Activated CD8-positive, alpha-beta T cell treated with anti-CD3 and anti-CD28 coated beads for 36 hours (primary cell): ENCODE measurements at regions of chr2 and their contacts with region 1.

Region 1: GRCh38 chr2:105744091-105744908 is 412 bp upstream of the NCK2 start:
- DNase-seq: peak; percentile 59
- ATAC-seq: peak; percentile 64
- H3K4me3 Mint-ChIP-seq: peak overlapping the region; percentile 75
- H3K27ac Mint-ChIP-seq: peak overlapping the region; percentile 88
- H3K4me1 Mint-ChIP-seq: peaks cover 60% of the 10 kb centered on the region
- H3K27me3 Mint-ChIP-seq: no peaks in the 10 kb centered on the region
- CTCF ChIP-seq: no peak

Region 2: GRCh38 chr2:105582952-105583660 is 161.2 kb before region 1 on chr2:
- CTCF ChIA-PET with region 1: interaction called, 3 read pairs
- POLR2A ChIA-PET with region 1: interaction called, 3 read pairs
- intact Hi-C with region 1: loop called (anchors 10 kb)
- DNase-seq: no peak
- ATAC-seq: no peak
- H3K4me3 Mint-ChIP-seq: no peak overlapping the region
- H3K27ac Mint-ChIP-seq: no peak overlapping the region
- H3K4me1 Mint-ChIP-seq: peaks cover 29% of the 10 kb centered on the region
- H3K27me3 Mint-ChIP-seq: no peaks in the 10 kb centered on the region
- CTCF ChIP-seq: no peak

Region 3: GRCh38 chr2:105789745-105790460 is 45.6 kb after region 1 on chr2:
- CTCF ChIA-PET with region 1: interaction called, 9 read pairs
- POLR2A ChIA-PET with region 1: interaction called, 27 read pairs
- intact Hi-C with region 1: no loop called
- DNase-seq: peak; percentile 87
- ATAC-seq: peak; percentile 82
- H3K4me3 Mint-ChIP-seq: peak overlapping the region; percentile 69
- H3K27ac Mint-ChIP-seq: peak overlapping the region; percentile 97
- H3K4me1 Mint-ChIP-seq: peaks cover 92% of the 10 kb centered on the region
- H3K27me3 Mint-ChIP-seq: no peaks in the 10 kb centered on the region
- CTCF ChIP-seq: no peak

Region 4: DNA sequence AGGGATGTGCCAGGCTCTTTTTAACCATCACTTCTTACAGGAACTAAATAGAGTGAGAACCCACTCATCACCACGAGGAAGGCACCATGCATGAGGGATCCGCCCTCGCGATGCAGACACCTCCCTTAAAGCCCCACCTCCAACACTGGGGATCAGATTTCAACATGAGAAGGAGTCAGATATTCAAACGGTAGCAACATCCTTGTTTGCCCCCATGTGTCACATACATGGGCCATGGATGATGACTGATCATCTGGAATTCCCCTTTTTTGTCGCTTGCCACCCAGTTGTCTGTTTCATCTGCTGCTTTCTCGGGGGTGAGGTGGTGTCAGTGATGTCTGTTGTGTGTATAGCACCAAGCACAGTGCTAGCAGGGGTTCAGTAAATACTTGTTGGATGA is 58.3 kb after region 1 on chr2:
- CTCF ChIA-PET with region 1: interaction called, 14 read pairs
- POLR2A ChIA-PET with region 1: interaction called, 53 read pairs
- intact Hi-C with region 1: loop called (anchors 2 kb)
- DNase-seq: peak; percentile 84
- ATAC-seq: peak; percentile 78
- H3K4me3 Mint-ChIP-seq: peak overlapping the region; percentile 19
- H3K27ac Mint-ChIP-seq: peak overlapping the region; percentile 93
- H3K4me1 Mint-ChIP-seq: peaks cover 95% of the 10 kb centered on the region
- H3K27me3 Mint-ChIP-seq: no peaks in the 10 kb centered on the region
- CTCF ChIP-seq: no peak

Region 5: DNA sequence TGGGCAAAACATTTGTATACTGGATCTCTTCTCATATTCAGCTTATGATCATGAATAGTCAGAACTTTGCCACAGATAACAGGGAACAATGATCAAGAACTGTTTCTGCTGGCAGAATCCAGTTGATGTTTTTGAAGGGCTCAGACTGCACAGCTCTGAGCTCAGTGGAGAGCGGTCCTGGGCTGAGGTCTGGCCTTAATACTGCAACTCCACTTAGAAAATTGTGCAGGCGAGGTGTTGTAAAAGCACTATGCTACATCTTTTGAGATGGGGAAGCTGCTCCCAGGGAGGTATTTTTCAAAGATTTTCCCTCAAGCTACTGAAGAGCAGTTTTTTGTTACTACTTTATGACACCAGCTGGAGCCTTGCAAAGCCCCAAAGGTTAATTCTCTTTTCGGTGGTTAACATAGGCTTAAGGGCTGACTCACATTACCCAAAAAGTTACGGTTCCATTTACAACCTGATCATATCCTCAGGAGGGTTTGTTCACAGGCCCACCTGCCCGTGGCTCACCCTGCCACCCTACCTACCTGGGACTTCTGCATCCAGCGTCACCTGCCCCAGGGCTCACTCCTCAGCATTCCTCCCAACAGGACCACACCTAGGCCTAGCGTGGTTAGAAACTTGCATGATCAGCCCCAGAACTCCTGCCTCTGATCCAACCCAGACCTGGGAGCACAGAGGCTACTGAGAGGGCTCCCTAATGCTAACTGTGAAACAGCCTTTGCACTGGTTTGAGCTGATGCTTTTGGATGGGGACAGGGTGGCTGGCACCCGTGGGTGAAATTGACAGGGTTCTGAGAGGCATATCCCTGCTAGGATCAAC is 114.8 kb after region 1 on chr2:
- CTCF ChIA-PET with region 1: interaction called, 6 read pairs
- POLR2A ChIA-PET with region 1: interaction called, 6 read pairs
- intact Hi-C with region 1: loop called (anchors 5 kb)
- DNase-seq: peak; percentile 62
- ATAC-seq: peak; percentile 64
- H3K4me3 Mint-ChIP-seq: peak overlapping the region; percentile 27
- H3K27ac Mint-ChIP-seq: peak overlapping the region; percentile 92
- H3K4me1 Mint-ChIP-seq: peaks cover 93% of the 10 kb centered on the region
- H3K27me3 Mint-ChIP-seq: no peaks in the 10 kb centered on the region
- CTCF ChIP-seq: no peak

Region 6: DNA sequence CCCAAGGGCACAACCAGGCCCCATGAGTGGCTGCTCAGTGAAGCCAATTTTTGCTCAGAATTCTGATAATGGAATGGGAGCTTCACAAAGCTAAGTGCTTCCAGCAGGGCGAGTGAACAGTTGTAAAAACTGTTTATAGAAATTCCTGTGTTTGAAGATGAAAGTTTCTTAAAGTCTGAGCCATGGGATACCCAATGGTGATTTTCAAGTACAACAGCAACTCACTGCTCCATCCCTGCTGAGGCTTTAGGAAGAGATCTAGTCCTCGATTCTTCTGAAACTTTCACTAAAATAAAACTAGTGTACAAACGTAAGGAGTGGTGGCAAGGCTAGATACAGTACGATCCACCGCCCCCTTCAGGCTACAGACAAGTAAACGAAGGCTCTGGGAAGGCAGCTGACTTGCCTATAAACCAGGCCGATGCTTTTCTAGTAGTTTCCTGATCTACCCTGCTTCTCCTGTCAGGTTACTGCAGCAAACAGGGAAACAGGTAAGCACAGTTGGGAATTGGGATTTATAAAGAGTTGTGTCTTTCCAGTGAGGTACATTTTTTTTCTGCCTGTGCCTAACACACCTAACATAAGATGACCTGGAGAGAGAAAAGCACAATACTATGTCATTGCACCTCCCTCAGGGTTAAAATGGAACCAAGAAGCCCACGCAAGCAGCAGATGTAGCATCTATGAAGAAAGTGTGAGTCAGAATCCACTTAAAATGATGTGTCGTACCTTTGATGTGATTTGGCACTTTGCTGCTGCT is 341.1 kb after region 1 on chr2:
- CTCF ChIA-PET with region 1: interaction called, 5 read pairs
- POLR2A ChIA-PET with region 1: interaction called, 7 read pairs
- intact Hi-C with region 1: loop called (anchors 5 kb)
- DNase-seq: peak; percentile 83
- ATAC-seq: peak; percentile 96
- H3K4me3 Mint-ChIP-seq: peak overlapping the region; percentile 66
- H3K27ac Mint-ChIP-seq: peak overlapping the region; percentile 93
- H3K4me1 Mint-ChIP-seq: peaks cover 68% of the 10 kb centered on the region
- H3K27me3 Mint-ChIP-seq: no peaks in the 10 kb centered on the region
- CTCF ChIP-seq: peak; percentile 60